ENCODE measurements at regions of chr5 and their contacts with region 1.

Region 1: GRCh38 chr5:40736103-40736875 is 19.5 kb downstream of the TTC33 start:
- DNase-seq: peak; percentile 23 to 65 (median 47)
- H3K4me3 ChIP-seq: no peak overlapping the region
- H3K4me3 Mint-ChIP-seq: no peak overlapping the region
- H3K27ac ChIP-seq: no peak overlapping the region
- H3K27ac Mint-ChIP-seq: peak overlapping the region in 2 of 7 donors; percentile 9 to 51
- H3K4me1 ChIP-seq: peaks cover 8 to 13% of the 10 kb centered on the region in 2 donors
- H3K4me1 Mint-ChIP-seq: peaks cover 10% of the 10 kb centered on the region
- H3K27me3 ChIP-seq: no peaks in the 10 kb centered on the region
- H3K27me3 Mint-ChIP-seq: peaks cover 0 to 2% (median 0%) of the 10 kb centered on the region in 3 donors
- CTCF ChIP-seq: peak; percentile 79

Region 2: DNA sequence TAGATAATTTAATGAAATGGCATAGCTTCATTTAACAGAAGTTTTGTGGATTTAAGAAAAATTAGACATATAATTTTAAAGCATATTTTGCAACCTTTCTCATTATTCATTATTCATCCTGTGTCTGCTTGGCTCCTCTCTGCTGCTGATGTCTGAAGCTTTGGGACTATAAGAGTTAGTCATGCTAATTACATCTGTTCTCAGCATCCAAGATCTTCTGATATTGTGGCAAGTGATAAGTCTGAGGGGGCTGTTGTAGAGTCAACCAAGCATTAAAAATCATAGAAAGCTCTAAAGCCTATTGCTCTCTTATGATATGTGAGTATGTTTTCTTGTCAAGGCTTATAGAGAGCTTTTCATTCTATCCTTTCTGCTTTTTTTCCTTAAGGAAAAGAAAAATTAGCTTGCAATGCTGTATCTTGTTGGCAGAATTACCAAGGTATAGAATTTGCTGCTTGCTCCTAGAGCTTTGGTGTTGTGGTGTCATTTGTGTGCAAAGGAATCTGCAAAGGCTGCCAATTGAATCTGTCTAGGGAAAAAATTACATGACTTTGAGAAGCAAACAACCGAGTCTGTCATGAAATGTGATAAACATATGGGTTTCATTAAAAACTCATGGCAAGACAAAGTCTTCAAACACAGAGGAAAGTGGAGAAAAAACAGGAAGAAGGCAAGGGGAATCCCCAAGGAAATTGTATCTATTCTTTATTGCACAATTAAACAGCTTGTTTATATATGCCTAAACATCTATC is 1155.4 kb before region 1 on chr5:
- intact Hi-C with region 1: loop called in 1 of 2 experiments (anchors 10 kb)
- DNase-seq: peak; percentile 35 to 70 (median 61)
- H3K4me3 ChIP-seq: peak overlapping the region in 1 of 3 experiments; percentile 9
- H3K4me3 Mint-ChIP-seq: peak overlapping the region in 1 of 2 donors; percentile 42
- H3K27ac ChIP-seq: no peak overlapping the region
- H3K27ac Mint-ChIP-seq: peak overlapping the region in 1 of 7 donors; percentile 61
- H3K4me1 ChIP-seq: peaks cover 10 to 15% of the 10 kb centered on the region in 2 donors
- H3K4me1 Mint-ChIP-seq: peaks cover 17% of the 10 kb centered on the region
- H3K27me3 ChIP-seq: no peaks in the 10 kb centered on the region
- H3K27me3 Mint-ChIP-seq: peaks cover 0 to 4% (median 0%) of the 10 kb centered on the region in 3 donors
- CTCF ChIP-seq: no peak

Region 3: GRCh38 chr5:39714036-39714698 is 1022.1 kb before region 1 on chr5:
- intact Hi-C with region 1: loop called (anchors 5 to 10 kb)
- DNase-seq: peak; percentile 19 to 46 (median 40)
- H3K4me3 ChIP-seq: no peak overlapping the region
- H3K4me3 Mint-ChIP-seq: no peak overlapping the region
- H3K27ac ChIP-seq: no peak overlapping the region
- H3K27ac Mint-ChIP-seq: peak overlapping the region in 2 of 7 donors; percentile 10 to 21
- H3K4me1 ChIP-seq: peaks cover 0 to 3% of the 10 kb centered on the region in 2 donors
- H3K4me1 Mint-ChIP-seq: peaks cover 6% of the 10 kb centered on the region
- H3K27me3 ChIP-seq: no peaks in the 10 kb centered on the region
- H3K27me3 Mint-ChIP-seq: peaks cover 0 to 2% (median 0%) of the 10 kb centered on the region in 3 donors
- CTCF ChIP-seq: peak; percentile 74

Region 4: GRCh38 chr5:39948867-39949468 is 787.3 kb before region 1 on chr5:
- intact Hi-C with region 1: loop called in 1 of 2 experiments (anchors 5 kb)
- DNase-seq: peak; percentile 37 to 61 (median 60)
- H3K4me3 ChIP-seq: no peak overlapping the region
- H3K4me3 Mint-ChIP-seq: no peak overlapping the region
- H3K27ac ChIP-seq: no peak overlapping the region
- H3K27ac Mint-ChIP-seq: peak overlapping the region in 3 of 7 donors; percentile 31 to 68 (median 34)
- H3K4me1 ChIP-seq: peaks cover 38 to 40% of the 10 kb centered on the region in 2 donors
- H3K4me1 Mint-ChIP-seq: peaks cover 34% of the 10 kb centered on the region
- H3K27me3 ChIP-seq: no peaks in the 10 kb centered on the region
- H3K27me3 Mint-ChIP-seq: peaks cover 0 to 2% (median 1%) of the 10 kb centered on the region in 3 donors
- CTCF ChIP-seq: peak; percentile 77

Region 5: GRCh38 chr5:40540301-40540700 is 196.0 kb before region 1 on chr5:
- intact Hi-C with region 1: no loop called
- DNase-seq: no peak
- H3K4me3 ChIP-seq: no peak overlapping the region
- H3K4me3 Mint-ChIP-seq: no peak overlapping the region
- H3K27ac ChIP-seq: no peak overlapping the region
- H3K27ac Mint-ChIP-seq: no peak overlapping the region
- H3K4me1 ChIP-seq: no peaks in the 10 kb centered on the region
- H3K4me1 Mint-ChIP-seq: no peaks in the 10 kb centered on the region
- H3K27me3 ChIP-seq: no peaks in the 10 kb centered on the region
- H3K27me3 Mint-ChIP-seq: peaks cover 0 to 2% (median 0%) of the 10 kb centered on the region in 3 donors
- CTCF ChIP-seq: no peak

Measured in CD14-positive monocyte (primary cell).